GM10248 (cell line): ENCODE measurements at regions of chr17 and their contacts with region 1.

Region 1: GRCh38 chr17:57671667-57672632 is 73.1 kb downstream of the CCDC182 start:
- DNase-seq: peak; percentile 87
- CTCF ChIP-seq: peak; percentile 94

Region 2: DNA sequence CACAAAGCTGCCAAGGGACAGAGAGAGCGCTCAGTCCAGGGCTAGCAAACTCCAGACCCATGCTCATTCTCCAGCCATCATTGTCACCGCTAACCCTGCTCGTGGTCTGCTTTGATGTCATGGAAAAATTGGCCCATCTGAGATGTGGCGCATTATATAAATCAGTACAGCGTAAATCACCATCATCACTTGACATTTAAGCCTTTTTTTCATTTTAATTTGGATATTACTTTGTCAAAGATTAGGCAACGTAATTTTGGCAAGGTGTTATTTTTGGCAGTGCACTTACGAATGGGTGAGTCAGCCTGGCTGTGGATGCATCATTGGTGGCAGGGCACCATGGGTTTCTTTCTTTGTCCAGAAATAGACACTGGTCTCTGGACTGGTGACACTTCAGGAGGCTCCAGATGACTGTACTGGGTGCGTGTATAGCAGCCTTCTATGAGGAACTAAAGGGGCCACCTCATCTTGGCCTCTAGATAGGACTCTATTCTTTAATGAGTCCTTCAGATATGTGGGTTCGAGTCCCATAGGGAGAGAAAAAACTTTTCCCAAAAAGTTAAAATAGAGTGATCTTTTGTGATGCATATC is 249.3 kb before region 1 on chr17:
- CTCF ChIA-PET with region 1: no interaction called
- POLR2A ChIA-PET with region 1: no interaction called
- DNase-seq: peak; percentile 60
- CTCF ChIP-seq: no peak

Region 3: DNA sequence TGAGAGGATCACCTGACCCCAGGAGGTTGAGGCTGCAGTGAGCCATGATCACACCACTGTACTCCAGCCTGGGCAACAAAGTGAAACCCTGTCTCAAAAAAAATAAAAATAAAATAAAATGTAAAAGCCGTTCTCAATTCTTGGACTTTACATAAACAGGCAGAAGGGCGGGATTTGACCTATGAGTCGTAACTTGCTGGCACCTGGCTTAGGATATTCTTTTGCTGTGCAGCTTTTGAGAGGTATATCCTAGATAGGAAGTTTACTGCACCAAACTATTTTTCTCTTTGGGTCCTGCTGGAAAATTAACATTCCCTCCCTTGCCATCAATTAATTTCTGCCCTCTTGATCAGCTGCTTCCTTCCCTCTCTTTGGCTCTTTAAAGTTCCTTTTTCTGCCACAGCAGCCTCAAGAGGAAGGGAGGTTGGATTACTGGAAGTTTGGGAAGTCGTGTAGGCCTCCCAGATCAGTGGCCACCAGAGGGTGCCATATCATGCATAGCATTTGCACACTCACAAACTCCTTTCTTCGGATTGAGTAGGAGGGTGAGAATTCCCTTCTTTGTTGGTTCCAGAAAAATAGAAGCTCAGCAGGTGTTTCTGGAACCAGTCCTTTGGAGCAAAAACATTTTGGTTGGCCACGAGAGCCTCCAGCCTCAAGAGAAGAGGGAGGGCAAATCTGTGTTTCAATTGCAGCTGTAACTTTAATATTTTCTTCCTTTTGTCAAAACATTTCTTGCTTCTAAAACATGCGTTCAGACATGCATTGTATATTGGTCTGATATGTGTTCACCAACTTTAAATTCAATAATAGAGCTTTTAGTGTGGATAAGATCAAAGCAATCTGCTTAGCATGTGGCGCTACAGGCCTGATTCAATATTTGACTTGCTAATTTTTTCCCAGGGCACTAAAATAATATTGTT is 74.2 kb before region 1 on chr17:
- CTCF ChIA-PET with region 1: interaction called, 18 read pairs
- POLR2A ChIA-PET with region 1: no interaction called
- DNase-seq: no peak
- CTCF ChIP-seq: peak; percentile 75

Region 4: DNA sequence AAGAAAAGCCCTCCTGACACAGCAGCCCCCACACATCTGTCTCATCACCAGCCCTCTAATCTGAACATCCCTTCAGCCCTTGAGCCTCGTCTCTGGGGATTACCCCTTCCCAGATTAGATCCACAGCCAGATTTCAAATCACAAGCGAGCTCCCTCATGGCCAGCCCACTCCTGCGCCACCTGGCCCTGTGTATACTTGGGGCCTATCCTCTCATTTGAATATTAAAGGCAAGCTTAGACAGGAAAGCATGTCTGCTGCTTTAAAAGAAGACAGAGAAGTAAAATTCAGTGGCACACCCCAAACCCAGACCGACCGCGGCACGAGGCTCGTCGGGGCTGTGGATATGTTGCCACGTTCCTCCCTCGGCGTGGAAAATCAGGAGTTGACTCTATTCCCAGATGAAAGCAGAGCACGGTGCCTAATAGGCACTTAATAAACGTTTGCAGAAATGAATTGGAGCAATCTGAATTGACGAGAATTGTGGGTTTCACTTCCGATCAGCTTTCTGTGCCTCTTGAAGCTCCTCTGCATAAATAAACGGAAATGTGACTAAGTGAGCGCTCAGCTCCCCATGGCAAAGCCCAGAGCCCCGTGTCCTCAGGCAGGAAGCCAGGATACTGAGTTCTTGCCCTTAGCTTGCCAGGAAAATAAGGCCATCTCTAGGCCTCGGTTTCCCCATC is 34.8 kb before region 1 on chr17:
- CTCF ChIA-PET with region 1: interaction called, 32 read pairs
- POLR2A ChIA-PET with region 1: no interaction called
- DNase-seq: no peak
- CTCF ChIP-seq: no peak

Region 5: DNA sequence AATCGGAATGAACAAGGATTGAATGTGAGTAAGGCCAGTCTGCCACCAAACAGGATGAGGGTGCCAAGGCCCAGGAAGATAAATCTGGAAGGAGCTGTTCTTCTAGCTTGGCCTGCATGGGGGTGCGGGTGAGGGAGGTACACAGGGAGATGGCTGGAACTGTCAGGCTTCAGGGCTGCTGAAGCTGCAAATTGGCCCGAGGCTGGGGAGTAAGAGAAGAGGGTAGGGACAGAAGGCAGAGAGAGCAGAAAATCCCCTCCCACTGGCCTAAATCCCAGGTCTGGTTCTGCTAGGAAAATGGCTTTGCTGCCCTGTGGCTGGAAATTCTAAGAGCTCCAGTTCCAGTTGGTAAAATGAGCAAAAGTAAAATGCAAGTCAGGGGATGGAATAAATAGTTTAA is 14.7 kb before region 1 on chr17:
- CTCF ChIA-PET with region 1: interaction called, 42 read pairs
- POLR2A ChIA-PET with region 1: interaction called, 9 read pairs
- DNase-seq: no peak
- CTCF ChIP-seq: no peak

Region 6: DNA sequence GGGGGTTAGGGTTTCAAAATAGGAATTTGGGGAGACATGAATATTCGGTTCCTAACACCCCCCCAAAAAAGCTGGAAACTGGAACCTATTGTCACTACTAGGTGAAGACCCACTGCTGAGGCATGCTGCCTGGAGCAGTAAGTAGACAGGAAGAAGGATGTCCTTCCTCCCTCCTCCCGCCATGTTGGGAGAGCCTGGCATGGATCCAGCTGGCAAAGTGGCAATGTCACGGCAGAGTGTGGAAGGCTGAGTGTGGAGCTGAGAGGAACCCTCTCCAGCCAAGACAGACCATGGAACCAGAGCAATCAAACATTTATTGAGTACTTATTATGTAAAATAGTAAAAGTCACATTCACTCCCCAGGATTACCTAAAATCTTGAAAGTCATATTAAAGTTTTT is 24.1 kb after region 1 on chr17:
- CTCF ChIA-PET with region 1: interaction called, 14 read pairs
- POLR2A ChIA-PET with region 1: no interaction called
- DNase-seq: no peak
- CTCF ChIP-seq: no peak